ENCODE measurements at regions of chr22 and their contacts with region 1.

Region 1: DNA sequence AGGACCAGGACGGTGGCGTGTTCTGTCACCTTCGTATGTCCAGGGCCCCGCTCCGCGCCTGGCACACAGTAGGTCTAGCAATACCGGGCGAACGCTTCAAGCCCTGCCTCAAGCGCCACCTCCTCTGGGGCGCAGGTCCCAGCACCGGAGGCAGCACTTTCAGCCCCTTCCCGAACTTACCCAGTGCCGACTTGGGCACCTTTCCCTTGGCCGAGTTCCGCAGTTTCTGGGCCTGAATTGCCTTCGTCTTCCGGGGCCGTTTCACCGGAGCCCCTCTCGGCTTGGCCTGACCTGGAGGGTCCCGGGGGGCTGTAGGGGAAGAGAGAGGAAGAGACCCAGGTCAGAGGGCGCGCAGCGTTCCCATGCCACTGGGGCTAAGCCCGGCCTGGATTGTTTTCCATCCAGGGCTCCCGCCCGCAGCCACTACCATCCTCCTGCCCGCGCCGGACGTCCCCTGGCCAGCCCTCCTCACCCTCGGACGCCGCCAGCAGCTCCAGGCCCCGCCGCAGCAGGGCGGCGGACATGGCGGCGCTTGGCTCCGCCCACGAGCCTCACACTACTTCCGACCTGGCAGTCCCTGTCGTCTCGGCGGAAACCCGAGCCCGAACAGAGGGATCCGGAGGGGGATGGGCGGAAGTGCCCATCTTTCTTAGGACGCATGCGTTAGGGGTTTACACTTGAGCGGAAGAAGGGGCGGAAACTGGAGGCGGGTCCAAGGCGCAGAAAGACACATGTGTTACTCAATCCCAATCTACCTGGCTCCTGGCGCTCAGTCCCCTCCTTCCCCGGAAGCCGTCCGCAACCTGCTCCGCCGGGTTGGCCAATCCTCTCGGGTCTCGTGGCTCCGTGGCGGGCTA is at the start of gene RPS19BP1:
- DNase-seq: peak; percentile 96

Region 2: GRCh38 chr22:39490135-39490798 is 42.2 kb before region 1 on chr22:
- CTCF ChIA-PET with region 1: interaction called, 33 read pairs
- POLR2A ChIA-PET with region 1: interaction called, 11 read pairs
- DNase-seq: peak; percentile 93

Region 3: DNA sequence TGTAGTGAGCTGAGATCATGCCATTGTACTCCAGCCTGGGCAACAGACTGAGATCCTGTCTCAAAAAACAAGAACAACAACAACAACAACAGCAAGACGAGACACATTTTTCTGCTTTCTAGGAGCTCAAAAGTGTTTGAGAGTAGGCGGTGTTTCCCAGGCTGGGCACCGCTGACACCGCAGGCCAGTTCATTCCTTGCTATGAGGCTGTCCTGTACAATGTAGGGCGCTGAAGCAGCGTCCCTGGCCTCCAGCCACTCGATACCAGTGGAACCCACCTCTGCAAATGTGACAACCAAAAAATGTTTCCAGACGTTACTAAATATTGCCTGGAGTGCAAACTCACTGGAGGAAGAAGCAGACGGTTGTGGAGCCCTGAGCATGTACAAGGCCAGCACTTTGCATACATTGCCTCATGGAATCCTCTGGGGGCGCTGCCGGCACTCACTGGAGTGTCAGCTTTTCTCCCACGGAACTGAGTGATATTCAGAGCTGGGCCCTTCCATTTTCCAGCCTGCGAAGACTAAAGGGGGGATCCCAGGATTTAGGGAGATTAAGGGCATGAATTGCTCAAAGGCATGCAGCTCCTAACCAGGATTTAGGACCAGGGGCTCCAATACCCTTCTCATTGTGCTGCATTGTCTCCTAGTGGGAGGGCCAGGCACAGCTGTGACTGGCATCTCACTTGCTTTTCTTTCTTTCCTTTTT is 36.2 kb before region 1 on chr22:
- CTCF ChIA-PET with region 1: interaction called, 45 read pairs
- POLR2A ChIA-PET with region 1: interaction called, 100 read pairs
- DNase-seq: peak; percentile 81

Region 4: GRCh38 chr22:39502109-39502788 is 30.2 kb before region 1 on chr22 and contains the start of gene MIEF1:
- CTCF ChIA-PET with region 1: interaction called, 12 read pairs
- POLR2A ChIA-PET with region 1: interaction called, 100 read pairs
- DNase-seq: peak; percentile 99

Region 5: GRCh38 chr22:40024201-40025061 is 492.0 kb after region 1 on chr22:
- CTCF ChIA-PET with region 1: interaction called, 11 read pairs
- POLR2A ChIA-PET with region 1: interaction called, 6 read pairs
- DNase-seq: peak; percentile 91